ENCODE measurements at regions of chr4 and their contacts with region 1.

Region 1: GRCh38 chr4:112379306-112379705 is 82.1 kb downstream of the ALPK1 start:
- DNase-seq: no peak
- H3K4me3 ChIP-seq: no peak overlapping the region
- H3K27ac ChIP-seq: no peak overlapping the region
- H3K4me1 ChIP-seq: no peaks in the 10 kb centered on the region
- H3K27me3 ChIP-seq: no peaks in the 10 kb centered on the region
- CTCF ChIP-seq: no peak

Region 2: DNA sequence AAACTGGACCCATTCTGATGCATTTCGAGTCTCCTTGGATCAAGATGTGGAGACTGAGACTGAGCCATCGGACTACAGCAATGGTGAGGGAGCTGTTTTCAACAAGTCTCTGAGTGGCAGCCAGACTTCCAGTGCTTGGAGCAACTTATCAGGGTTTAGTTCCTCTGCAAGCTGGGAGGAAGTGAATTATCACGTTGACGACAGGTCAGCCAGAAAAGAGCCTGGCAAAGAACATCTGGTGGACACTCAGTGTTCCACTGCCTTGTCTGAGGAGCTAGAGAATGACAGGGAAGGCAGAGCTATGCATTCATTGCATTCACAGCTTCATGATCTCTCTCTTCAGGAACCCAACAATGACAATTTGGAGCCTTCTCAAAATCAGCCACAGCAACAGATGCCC is 51.9 kb after region 1 on chr4:
- CTCF ChIA-PET with region 1: no interaction called
- dilution Hi-C with region 1: loop called (anchors 10 kb)
- in situ Hi-C with region 1: no loop called
- intact Hi-C with region 1: no loop called
- DNase-seq: no peak
- H3K4me3 ChIP-seq: no peak overlapping the region
- H3K27ac ChIP-seq: no peak overlapping the region
- H3K4me1 ChIP-seq: no peaks in the 10 kb centered on the region
- H3K27me3 ChIP-seq: no peaks in the 10 kb centered on the region
- CTCF ChIP-seq: no peak

Region 3: DNA sequence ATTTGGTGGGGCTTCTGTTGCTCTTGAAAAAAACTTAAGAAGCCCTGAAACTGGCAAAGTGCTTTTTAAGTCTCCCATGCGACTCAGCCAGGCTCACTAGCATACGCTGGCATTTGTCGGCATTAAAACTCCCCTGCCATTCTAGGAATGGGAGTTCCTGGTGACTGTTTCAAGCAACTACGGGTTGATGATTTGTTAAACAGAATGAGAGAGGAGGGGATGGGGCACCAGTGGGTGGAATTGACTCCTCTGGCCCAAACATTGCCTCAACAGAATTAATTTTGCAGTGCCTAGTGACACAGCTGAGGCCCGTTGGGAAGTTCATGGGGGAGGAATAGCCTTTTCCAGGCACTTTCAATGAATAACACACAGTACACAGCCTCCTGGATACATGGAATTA is 106.6 kb after region 1 on chr4:
- CTCF ChIA-PET with region 1: no interaction called
- dilution Hi-C with region 1: no loop called
- in situ Hi-C with region 1: no loop called
- intact Hi-C with region 1: no loop called
- DNase-seq: no peak
- H3K4me3 ChIP-seq: no peak overlapping the region
- H3K27ac ChIP-seq: no peak overlapping the region
- H3K4me1 ChIP-seq: no peaks in the 10 kb centered on the region
- H3K27me3 ChIP-seq: no peaks in the 10 kb centered on the region
- CTCF ChIP-seq: no peak

Measured in mammary epithelial cell (primary cell).